PC-9 (cell line): ENCODE measurements at regions of chr16 and their contacts with region 1.

Region 1: DNA sequence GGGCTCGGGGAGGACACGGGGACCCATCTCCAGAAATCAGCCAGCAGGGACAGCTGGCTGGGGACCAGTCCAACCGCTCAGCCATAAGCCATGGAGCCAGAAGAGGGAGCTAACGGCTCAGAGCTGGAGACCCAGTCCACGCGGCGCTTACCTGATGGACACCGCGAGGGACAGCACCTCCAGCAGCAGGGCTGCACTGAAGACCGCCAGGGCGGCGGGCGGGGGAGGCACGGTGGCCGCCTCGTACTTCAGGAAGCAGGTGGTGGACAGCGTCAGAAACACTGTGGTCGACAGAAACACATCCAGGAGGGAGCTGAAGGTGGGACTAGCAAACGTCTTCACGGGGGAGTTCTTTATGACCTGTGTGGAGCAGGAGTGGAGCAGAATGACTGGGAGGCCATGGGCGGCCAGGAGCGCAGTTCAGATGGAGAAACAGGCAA is 102.6 kb upstream of the CREBBP start:
- DNase-seq: peak; percentile 64 to 91
- H3K4me3 ChIP-seq: no peak overlapping the region
- H3K27ac ChIP-seq: no peak overlapping the region
- H3K4me1 ChIP-seq: no peaks in the 10 kb centered on the region
- H3K27me3 ChIP-seq: no peaks in the 10 kb centered on the region
- CTCF ChIP-seq: peak; percentile 82

Region 2: GRCh38 chr16:4090351-4090851 is 107.3 kb after region 1 on chr16:
- CTCF ChIA-PET with region 1: no interaction called
- POLR2A ChIA-PET with region 1: no interaction called
- intact Hi-C with region 1: no loop called
- DNase-seq: no peak
- H3K4me3 ChIP-seq: no peak overlapping the region
- H3K27ac ChIP-seq: no peak overlapping the region
- H3K4me1 ChIP-seq: no peaks in the 10 kb centered on the region
- H3K27me3 ChIP-seq: no peaks in the 10 kb centered on the region
- CTCF ChIP-seq: no peak

Region 3: GRCh38 chr16:4116337-4117249 is 133.5 kb after region 1 on chr16 and contains the start of gene ADCY9:
- CTCF ChIA-PET with region 1: interaction called, 10 read pairs
- POLR2A ChIA-PET with region 1: no interaction called
- intact Hi-C with region 1: loop called (anchors 5 kb)
- DNase-seq: peak in 1 of 2 experiments; percentile 82
- H3K4me3 ChIP-seq: peak within 1 kb of the TSS; percentile 56; the same call in 1 of the 2 replicates
- H3K27ac ChIP-seq: no peak within 1 kb of the TSS
- H3K4me1 ChIP-seq: no peaks in the 10 kb centered on the region
- H3K27me3 ChIP-seq: no peaks in the 10 kb centered on the region
- CTCF ChIP-seq: no peak
- total RNA-seq, gene ADCY9: 9.8 and 10.5 TPM in 2 replicates

Region 4: DNA sequence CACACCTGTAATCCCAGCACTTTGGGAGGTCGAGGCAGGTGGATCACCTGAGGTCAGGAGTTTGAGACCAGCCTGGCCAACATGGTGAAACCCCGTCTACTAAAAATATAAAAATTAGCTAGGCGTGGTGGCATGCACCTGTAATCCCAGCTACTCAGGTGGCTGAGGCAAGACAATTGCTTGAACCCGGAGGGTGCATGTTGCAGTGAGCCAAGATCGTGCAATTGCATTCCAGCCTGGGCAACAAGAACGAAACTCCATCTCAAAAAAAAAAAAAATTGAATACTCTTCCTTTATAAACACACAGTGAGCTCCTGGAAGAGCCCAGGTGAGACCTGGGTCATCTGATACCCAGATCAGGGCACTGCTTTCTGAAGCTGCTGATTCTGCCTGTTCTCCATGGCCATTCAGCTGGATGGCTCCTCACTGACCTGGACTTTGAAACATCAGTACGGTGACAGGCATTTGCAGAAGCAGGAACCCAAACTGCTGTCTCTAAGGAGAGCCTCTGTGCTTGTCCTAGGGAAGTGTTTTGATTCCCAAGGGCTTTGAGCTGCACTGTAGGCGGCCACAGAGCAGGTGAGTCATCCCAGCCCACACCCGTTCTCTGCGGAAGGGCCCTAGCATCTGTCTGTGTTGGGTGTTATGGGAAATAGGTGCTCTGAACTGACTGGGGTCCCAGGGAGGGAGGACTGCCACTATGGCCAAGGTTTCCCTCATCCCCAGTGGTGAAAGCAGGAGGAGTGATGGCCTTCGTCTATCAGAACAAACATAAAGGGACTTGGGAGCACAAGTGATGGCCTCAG is 193.7 kb after region 1 on chr16:
- CTCF ChIA-PET with region 1: interaction called, 10 read pairs
- POLR2A ChIA-PET with region 1: no interaction called
- intact Hi-C with region 1: loop called (anchors 5 kb)
- DNase-seq: peak; percentile 65 to 69
- H3K4me3 ChIP-seq: peak overlapping the region; percentile 36; the same call in 1 of the 2 replicates
- H3K27ac ChIP-seq: peak overlapping the region; percentile 69
- H3K4me1 ChIP-seq: peaks cover 32% of the 10 kb centered on the region
- H3K27me3 ChIP-seq: no peaks in the 10 kb centered on the region
- CTCF ChIP-seq: no peak

Region 5: GRCh38 chr16:4183237-4184036 is 200.3 kb after region 1 on chr16:
- CTCF ChIA-PET with region 1: no interaction called
- POLR2A ChIA-PET with region 1: no interaction called
- intact Hi-C with region 1: loop called (anchors 5 kb)
- DNase-seq: peak; percentile 92 to 97
- H3K4me3 ChIP-seq: peak overlapping the region; percentile 80
- H3K27ac ChIP-seq: peak overlapping the region; percentile 95
- H3K4me1 ChIP-seq: peaks cover 23% of the 10 kb centered on the region
- H3K27me3 ChIP-seq: no peaks in the 10 kb centered on the region
- CTCF ChIP-seq: no peak

Region 6: GRCh38 chr16:4271176-4272066 is 288.3 kb after region 1 on chr16:
- CTCF ChIA-PET with region 1: no interaction called
- POLR2A ChIA-PET with region 1: no interaction called
- intact Hi-C with region 1: loop called (anchors 5 kb)
- DNase-seq: peak; percentile 82 to 94
- H3K4me3 ChIP-seq: peak overlapping the region; percentile 81
- H3K27ac ChIP-seq: peak overlapping the region; percentile 92
- H3K4me1 ChIP-seq: peaks cover 7% of the 10 kb centered on the region
- H3K27me3 ChIP-seq: no peaks in the 10 kb centered on the region
- CTCF ChIP-seq: no peak

Region 7: GRCh38 chr16:4330277-4330874 is 347.3 kb after region 1 on chr16:
- CTCF ChIA-PET with region 1: interaction called, 3 read pairs
- POLR2A ChIA-PET with region 1: no interaction called
- intact Hi-C with region 1: loop called (anchors 2 kb)
- DNase-seq: peak in 1 of 2 experiments; percentile 85
- H3K4me3 ChIP-seq: no peak overlapping the region
- H3K27ac ChIP-seq: no peak overlapping the region
- H3K4me1 ChIP-seq: no peaks in the 10 kb centered on the region
- H3K27me3 ChIP-seq: no peaks in the 10 kb centered on the region
- CTCF ChIP-seq: peak; percentile 96